ENCODE measurements at regions of chr17 and their contacts with region 1.

Region 1: DNA sequence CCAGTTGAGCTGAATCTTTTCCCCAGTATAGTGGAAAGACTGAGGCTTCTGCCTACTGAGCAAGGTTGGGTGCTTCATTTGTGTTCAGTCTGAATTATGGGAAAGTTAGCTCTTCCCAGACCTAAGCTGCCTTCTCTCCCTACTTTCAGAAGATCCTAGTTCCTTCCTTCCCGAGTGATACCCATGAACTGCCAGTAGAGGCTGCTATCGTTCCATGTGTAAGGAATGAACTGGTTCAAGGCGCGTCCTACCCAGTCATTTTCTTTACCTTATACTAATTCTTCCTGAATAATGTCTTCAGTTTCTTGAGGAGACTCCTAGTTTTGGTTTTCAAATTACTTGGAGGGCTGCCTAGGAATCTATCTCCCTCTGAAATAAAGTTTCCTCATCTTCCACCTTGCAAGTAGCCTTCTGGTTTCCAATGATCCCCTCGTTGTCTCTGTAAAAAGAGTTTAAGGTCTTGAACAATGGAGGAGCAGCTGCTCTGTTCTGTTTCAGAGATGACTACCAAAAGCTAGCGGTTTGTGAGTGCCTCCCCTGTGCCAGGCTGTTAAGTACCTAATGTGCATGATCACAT is 934 bp upstream of the AOC2 start:
- DNase-seq: peak; percentile 56
- H3K4me3 ChIP-seq: no peak overlapping the region
- H3K27ac ChIP-seq: no peak overlapping the region
- H3K4me1 ChIP-seq: no peaks in the 10 kb centered on the region
- CTCF ChIP-seq: peak; percentile 85

Region 2: DNA sequence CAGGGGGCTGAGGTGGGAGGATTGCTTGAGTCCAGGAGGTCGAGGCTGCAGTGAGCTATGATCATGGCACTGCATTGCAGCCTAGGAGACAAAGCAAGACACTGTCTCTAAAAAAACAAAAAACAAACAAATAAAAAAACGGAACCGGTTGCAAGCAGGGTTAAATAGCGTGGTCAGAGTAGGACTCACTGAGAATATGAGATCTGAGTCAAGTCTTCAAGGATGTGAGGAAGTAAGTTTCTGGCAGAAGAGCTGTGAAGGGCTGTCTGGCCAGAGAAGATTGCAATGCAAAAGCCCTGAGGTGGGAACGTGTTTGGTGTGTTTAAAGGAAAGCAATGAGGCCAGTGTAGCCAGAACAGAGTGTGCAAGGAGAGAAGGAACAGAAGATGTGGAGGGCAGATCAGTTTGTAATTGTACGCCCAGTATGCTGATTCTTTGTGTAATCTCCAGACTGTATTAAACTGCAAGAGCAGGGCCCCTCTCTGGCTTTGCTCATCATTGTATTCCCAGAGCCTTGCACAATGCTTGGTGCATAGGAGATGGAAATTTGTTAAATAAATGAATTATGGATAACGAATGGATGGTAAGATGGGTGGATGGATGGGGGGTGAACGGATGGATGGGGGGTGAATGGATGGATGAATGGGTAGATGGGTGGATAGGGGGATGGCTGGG is 63.5 kb after region 1 on chr17:
- CTCF ChIA-PET with region 1: no interaction called
- POLR2A ChIA-PET with region 1: no interaction called
- intact Hi-C with region 1: no loop called
- DNase-seq: no peak
- H3K4me3 ChIP-seq: no peak overlapping the region
- H3K27ac ChIP-seq: peak overlapping the region; percentile 77
- H3K4me1 ChIP-seq: peaks cover 47% of the 10 kb centered on the region
- CTCF ChIP-seq: no peak

Region 3: DNA sequence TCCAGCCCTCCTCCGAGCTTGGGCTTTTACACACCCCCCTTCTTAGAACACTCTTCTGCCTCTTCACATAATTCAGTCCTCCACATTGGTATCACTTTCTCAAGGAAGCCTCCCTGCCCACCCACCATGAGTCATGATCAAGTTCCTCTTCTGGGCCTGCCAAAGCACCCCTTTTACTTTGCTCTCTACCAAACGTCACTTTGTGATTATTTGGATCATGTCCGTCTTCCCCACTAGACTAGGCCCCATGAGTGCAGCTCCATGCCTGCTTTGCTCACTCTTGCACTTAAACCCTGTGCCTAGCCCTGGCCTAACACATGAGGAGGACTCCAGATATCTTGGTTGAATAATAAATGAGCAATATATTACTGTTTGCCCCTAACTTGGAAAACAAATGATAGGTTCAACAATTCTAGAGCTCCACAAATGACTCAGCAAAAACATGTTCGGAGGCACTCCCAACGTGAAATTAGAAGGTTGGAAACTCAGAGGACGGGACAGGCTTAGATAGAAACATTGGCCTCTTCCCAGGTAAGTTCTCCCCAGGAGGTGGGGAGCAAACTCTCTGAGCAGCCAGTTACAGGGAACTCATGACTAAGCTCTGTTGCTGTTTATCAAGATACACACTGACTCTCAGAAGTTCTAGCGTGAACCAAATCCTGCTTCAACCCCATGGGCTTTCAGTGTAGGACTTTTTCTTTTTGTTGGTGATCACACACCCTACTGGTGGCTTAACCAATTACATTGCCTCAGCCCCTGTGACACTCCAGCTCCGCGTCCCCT is 85.5 kb after region 1 on chr17:
- CTCF ChIA-PET with region 1: no interaction called
- POLR2A ChIA-PET with region 1: no interaction called
- intact Hi-C with region 1: loop called (anchors 1 kb)
- DNase-seq: peak; percentile 87
- H3K4me3 ChIP-seq: no peak overlapping the region
- H3K27ac ChIP-seq: peak overlapping the region; percentile 10
- H3K4me1 ChIP-seq: peaks cover 8% of the 10 kb centered on the region
- CTCF ChIP-seq: peak; percentile 91

Region 4: GRCh38 chr17:43183921-43184320 is 340.5 kb after region 1 on chr17:
- CTCF ChIA-PET with region 1: no interaction called
- POLR2A ChIA-PET with region 1: no interaction called
- intact Hi-C with region 1: no loop called
- DNase-seq: no peak
- H3K4me3 ChIP-seq: no peak overlapping the region
- H3K27ac ChIP-seq: no peak overlapping the region
- H3K4me1 ChIP-seq: peaks cover 11% of the 10 kb centered on the region
- CTCF ChIP-seq: no peak